Transverse colon (tissue), 4 donors: ENCODE measurements at regions of chr14 and their contacts with region 1.

Region 1: GRCh38 chr14:61213920-61214319 is 67.2 kb downstream of the TMEM30B start:
- DNase-seq: no peak
- H3K4me3 ChIP-seq: no peak overlapping the region
- H3K27ac ChIP-seq: no peak overlapping the region
- H3K4me1 ChIP-seq: no peaks in the 10 kb centered on the region
- H3K27me3 ChIP-seq: peaks cover 5% of the 10 kb centered on the region
- CTCF ChIP-seq: no peak
- EP300 ChIP-seq: no peak
- POLR2A ChIP-seq: no peak

Region 2: DNA sequence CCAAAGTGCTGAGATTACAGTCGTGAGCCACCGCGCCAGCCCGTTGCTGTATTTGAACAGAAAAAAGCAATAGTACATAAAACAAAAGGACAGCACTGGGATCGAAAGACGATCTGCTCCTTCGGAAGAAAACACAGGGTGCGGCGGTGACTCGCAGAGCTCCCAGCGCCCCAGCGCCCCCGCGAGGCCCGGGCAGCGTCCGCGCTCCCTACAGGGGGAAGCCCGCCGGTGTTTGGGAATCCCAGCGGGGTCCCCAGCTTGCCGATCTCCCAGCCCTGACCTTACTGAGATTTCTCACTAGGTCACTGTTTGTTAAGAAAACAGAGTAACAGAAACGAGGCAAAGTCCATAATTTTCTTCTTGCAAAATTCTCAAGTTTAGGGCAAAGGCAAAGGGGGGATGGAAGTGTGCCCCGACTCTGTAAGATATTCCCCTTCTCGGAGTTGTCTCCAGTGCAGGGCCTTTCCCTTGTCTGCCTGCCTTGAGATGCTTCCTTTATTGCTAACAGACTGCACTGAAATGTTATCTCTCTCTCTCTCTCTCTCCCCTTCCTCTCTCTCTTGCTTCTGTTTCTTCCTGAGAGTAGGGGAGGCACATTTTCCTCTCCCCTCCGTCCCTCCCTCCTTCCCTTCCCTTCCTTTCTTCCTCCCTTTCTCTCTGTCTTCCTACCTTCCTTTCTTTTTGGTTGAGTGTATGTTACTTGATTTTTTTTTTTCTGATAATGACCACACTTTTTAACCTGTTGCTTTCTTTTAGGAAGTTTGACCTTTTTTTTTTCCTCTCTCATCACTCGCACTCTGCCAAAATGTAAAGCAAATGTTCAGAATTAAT is 24.7 kb before region 1 on chr14:
- in situ Hi-C with region 1: no loop called
- intact Hi-C with region 1: loop called (anchors 1 kb)
- DNase-seq: peak; percentile 23
- H3K4me3 ChIP-seq: peak overlapping the region in 3 of 4 donors; percentile 3 to 42 (median 10)
- H3K27ac ChIP-seq: peak overlapping the region in 3 of 4 donors; percentile 43 to 48 (median 45)
- H3K4me1 ChIP-seq: no peaks in the 10 kb centered on the region
- H3K27me3 ChIP-seq: peaks cover 16% of the 10 kb centered on the region
- CTCF ChIP-seq: peak in 3 of 5 experiments; percentile 16 to 34 (median 24)
- EP300 ChIP-seq: no peak
- POLR2A ChIP-seq: no peak